Right lobe of liver (tissue), 6 donors: ENCODE measurements at regions of chr17 and their contacts with region 1.

Region 1: DNA sequence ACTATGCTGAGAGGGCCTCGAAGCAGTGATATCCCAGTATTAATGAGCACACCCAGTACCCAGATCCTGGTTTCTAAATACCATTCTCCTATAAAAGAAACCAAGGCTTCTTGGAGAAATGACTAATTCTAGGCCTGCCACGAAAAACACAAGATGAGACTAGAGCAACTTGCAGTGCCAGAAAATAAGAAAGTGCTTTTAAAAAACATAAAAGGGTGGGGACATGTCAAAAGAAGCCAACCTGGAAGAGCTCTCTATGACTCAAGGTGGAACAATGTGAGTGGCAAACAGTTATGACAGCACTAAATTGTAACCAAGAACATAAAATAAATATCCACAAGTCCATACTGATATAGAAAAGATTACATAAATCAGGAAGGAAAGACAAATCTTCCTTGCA is 153.2 kb upstream of the KCNJ18 start:
- DNase-seq: no peak
- ATAC-seq: no peak
- H3K4me3 ChIP-seq: no peak overlapping the region
- H3K27ac ChIP-seq: no peak overlapping the region
- H3K4me1 ChIP-seq: no peaks in the 10 kb centered on the region
- H3K27me3 ChIP-seq: no peaks in the 10 kb centered on the region
- CTCF ChIP-seq: no peak
- POLR2A ChIP-seq: no peak

Region 2: GRCh38 chr17:21475571-21475970 is 63.6 kb before region 1 on chr17:
- intact Hi-C with region 1: loop called in 1 of 2 experiments (anchors 10 kb)
- DNase-seq: no peak
- ATAC-seq: no peak
- H3K4me3 ChIP-seq: no peak overlapping the region
- H3K27ac ChIP-seq: no peak overlapping the region
- H3K4me1 ChIP-seq: no peaks in the 10 kb centered on the region
- H3K27me3 ChIP-seq: no peaks in the 10 kb centered on the region
- CTCF ChIP-seq: no peak
- POLR2A ChIP-seq: no peak

Region 3: GRCh38 chr17:21573961-21574610 is 34.9 kb after region 1 on chr17:
- intact Hi-C with region 1: no loop called
- DNase-seq: peak in 1 of 3 donors; percentile 44
- ATAC-seq: peak in 2 of 4 donors; percentile 29 to 45
- H3K4me3 ChIP-seq: peak overlapping the region; percentile 7 to 32 (median 9)
- H3K27ac ChIP-seq: no peak overlapping the region
- H3K4me1 ChIP-seq: no peaks in the 10 kb centered on the region
- H3K27me3 ChIP-seq: no peaks in the 10 kb centered on the region
- CTCF ChIP-seq: no peak
- POLR2A ChIP-seq: no peak